Calu3 (cell line): ENCODE measurements at regions of chr6 and their contacts with region 1.

Region 1: DNA sequence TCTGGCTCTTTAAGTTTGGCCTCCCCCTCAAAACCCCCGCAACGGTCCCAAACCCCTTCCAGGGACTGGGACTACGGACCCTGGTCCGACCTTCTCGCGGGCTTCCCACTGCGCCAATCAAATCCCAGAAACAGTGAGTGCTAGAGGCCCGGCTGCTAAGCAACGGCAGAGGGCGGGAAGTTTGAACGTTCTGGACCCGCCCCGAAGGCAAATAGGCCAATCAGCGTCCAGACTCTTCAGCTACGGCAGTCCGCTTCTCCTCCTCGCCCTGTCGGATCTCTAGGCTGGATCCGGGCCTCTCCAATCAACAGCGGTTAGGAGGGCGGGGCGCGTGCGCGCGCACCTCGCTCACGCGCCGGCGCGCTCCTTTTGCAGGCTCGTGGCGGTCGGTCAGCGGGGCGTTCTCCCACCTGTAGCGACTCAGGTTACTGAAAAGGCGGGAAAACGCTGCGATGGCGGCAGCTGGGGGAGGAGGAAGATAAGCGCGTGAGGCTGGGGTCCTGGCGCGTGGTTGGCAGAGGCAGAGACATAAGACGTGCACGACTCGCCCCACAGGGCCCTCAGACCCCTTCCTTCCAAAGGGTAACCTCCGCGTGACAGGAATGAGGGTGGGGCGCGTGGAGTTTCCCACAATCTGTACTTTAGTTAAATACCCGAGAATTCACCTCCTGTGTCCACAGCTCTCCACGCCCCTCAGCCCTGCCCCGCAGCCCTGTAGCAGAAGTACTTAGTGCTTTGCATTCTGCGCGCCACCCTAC is at the start of gene MSH5:
- DNase-seq: peak; percentile 100
- H3K4me3 Mint-ChIP-seq: peak within 1 kb of the TSS; percentile 98
- H3K27ac Mint-ChIP-seq: peak within 1 kb of the TSS; percentile 94
- H3K4me1 Mint-ChIP-seq: peaks cover 51% of the 10 kb centered on the region
- H3K27me3 Mint-ChIP-seq: no peaks in the 10 kb centered on the region
- CTCF ChIP-seq: no peak
- total RNA-seq, gene MSH5: 156 and 176 TPM in 2 replicates

Region 2: GRCh38 chr6:31383149-31383548 is 356.7 kb before region 1 on chr6:
- CTCF ChIA-PET with region 1: no interaction called
- intact Hi-C with region 1: no loop called
- DNase-seq: no peak
- H3K4me3 Mint-ChIP-seq: no peak overlapping the region
- H3K27ac Mint-ChIP-seq: no peak overlapping the region
- H3K4me1 Mint-ChIP-seq: no peaks in the 10 kb centered on the region
- H3K27me3 Mint-ChIP-seq: peaks cover 97% of the 10 kb centered on the region
- CTCF ChIP-seq: no peak

Region 3: DNA sequence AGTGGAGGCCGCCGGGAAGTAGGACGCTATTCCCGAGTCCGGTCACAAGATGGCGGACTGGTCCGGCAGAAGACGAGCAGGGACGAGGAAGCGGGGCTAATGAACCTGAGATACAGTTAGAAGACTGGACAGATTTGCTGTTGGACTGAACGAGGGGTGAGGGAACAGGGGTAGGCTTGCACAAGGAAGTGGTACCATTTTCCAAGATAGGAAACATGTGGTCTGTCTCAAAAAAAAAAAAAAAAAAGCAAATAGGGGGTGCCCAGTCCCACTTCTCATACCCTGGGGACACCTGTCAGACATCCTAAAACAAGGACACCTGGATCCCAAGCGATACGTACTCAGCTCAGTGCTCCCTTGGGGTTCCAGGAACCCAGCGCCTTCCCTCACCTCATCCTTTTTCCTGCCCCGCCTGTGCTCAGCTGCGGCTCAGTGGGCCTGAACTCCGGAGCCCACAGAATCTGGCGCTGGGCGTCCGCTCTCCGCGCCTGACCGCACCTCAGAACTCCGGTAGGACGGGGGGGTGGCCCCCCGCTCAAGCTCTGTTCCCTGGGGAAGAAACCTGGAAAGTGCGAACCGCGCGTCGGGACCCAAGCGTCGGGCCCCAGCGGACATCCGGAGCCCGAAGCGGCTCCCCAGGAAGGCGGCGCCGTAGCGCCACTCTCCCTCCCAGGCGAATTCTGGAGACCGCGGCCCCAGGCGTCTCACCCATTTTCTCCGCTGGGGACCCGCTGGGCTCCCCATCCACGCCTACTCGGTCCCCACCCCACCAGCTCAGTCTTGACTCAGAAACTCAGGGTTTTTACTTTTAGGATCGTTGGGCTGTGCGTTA is 58.8 kb before region 1 on chr6 and contains the start of gene LY6G5C:
- CTCF ChIA-PET with region 1: interaction called, 12 read pairs
- intact Hi-C with region 1: loop called (anchors 1 kb)
- DNase-seq: peak; percentile 94
- H3K4me3 Mint-ChIP-seq: peak within 1 kb of the TSS; percentile 75
- H3K27ac Mint-ChIP-seq: peak within 1 kb of the TSS; percentile 89
- H3K4me1 Mint-ChIP-seq: peaks cover 28% of the 10 kb centered on the region
- H3K27me3 Mint-ChIP-seq: no peaks in the 10 kb centered on the region
- CTCF ChIP-seq: peak; percentile 83
- total RNA-seq, gene LY6G5C: 4.9 and 5.4 TPM in 2 replicates

Region 4: DNA sequence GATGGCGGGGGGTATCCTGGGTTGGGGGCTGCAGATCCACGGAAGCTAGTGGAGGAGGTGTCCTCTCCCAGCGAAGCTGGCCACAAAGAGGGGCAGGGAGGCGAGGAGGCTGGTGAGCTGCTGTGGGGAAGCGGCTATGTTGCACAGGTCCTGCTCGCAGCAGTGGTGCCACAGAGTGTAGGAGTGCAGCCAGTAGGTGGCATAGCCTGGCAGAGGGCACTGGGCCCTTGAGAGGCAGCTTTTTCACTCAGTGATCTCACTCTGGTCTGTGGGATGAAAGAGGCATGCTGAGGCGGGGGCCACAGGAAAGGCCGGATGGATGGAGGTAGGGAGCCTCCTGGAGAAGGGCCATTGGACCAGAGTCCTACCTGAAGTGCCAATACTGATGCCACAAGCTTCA is 27.5 kb before region 1 on chr6:
- CTCF ChIA-PET with region 1: interaction called, 20 read pairs
- intact Hi-C with region 1: no loop called
- DNase-seq: peak; percentile 71
- H3K4me3 Mint-ChIP-seq: no peak overlapping the region
- H3K27ac Mint-ChIP-seq: no peak overlapping the region
- H3K4me1 Mint-ChIP-seq: peaks cover 25% of the 10 kb centered on the region
- H3K27me3 Mint-ChIP-seq: peaks cover 26% of the 10 kb centered on the region
- CTCF ChIP-seq: peak; percentile 54

Region 5: GRCh38 chr6:31729515-31729978 is 10.3 kb before region 1 on chr6:
- CTCF ChIA-PET with region 1: interaction called, 49 read pairs
- intact Hi-C with region 1: loop called (anchors 1 kb)
- DNase-seq: peak; percentile 98
- H3K4me3 Mint-ChIP-seq: peak overlapping the region; percentile 89
- H3K27ac Mint-ChIP-seq: peak overlapping the region; percentile 92
- H3K4me1 Mint-ChIP-seq: peaks cover 29% of the 10 kb centered on the region
- H3K27me3 Mint-ChIP-seq: no peaks in the 10 kb centered on the region
- CTCF ChIP-seq: no peak

Region 6: DNA sequence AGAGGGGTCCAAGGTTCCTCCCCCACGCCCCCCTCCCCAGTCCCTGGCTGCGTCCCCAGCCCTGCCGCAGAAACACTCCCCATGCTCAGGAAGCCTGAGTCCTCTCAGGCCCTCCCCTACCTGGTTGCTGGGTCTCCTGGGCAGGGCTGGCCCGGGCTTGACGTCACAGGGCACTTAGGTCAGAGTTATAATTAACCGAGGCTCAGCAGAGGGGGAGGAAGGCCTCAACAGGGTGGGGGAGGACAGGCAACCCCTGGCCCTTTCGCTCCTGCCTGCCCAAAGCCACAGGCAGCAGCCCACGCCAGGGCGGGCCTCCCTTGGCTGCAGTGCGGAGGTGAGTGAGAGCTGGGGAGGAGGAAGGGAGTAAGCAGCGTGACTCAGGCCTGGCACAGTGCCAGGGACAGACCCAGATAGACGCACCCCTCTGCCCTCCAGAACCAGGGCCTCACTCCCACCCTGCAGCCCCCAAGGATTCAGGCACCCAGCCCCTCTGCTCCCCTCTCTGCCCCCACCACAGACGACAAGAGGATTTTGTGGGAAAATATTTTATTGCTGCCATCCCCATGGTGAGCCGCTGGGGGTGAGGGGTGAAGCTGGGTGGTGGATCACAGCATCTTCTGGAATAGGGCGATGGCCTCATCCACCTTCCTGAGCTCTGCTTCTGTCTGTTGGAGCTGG is 37.3 kb after region 1 on chr6 and contains the start of gene VWA7:
- CTCF ChIA-PET with region 1: interaction called, 16 read pairs
- intact Hi-C with region 1: no loop called
- DNase-seq: peak; percentile 99
- H3K4me3 Mint-ChIP-seq: peak within 1 kb of the TSS; percentile 65
- H3K27ac Mint-ChIP-seq: peak within 1 kb of the TSS; percentile 94
- H3K4me1 Mint-ChIP-seq: peaks cover 43% of the 10 kb centered on the region
- H3K27me3 Mint-ChIP-seq: no peaks in the 10 kb centered on the region
- CTCF ChIP-seq: peak; percentile 36
- total RNA-seq, gene VWA7: 22.1 and 37.6 TPM in 2 replicates